ENCODE measurements at regions of chr3 and their contacts with region 1.

Region 1: DNA sequence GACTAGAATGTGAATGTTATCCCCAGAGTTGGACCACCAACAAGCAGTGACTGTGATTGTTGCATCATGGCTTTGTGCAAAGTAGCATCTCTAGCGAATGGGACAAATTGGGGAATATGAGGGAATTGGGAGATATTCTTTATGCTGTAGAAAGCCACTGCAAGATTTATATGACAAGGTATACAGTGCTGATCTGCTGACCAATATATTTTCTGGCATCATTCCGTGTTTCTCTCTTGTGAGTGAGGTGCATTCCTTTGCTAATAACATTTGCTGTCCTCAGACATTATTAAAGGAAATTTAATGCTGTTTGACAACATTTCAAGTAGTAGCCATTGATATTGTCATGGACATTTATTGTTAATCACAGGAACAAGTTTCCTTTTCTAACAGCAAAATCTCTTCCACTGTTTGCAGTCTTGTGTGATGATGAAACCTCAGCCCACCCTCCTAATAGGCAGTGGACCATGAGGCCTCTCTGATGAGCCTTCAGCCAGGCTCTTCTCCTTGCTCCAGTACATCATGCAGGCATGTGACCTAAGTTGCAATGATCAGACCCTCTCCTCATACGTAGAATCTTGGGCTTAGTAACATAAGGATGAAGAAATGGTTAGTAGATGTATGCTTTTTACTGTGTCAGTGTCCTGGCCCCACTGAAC is 16.1 kb downstream of the CNTN4 start:
- DNase-seq: no peak
- ATAC-seq: no peak
- H3K4me3 ChIP-seq: no peak overlapping the region
- H3K27ac ChIP-seq: no peak overlapping the region
- H3K4me1 ChIP-seq: no peaks in the 10 kb centered on the region
- H3K27me3 ChIP-seq: no peaks in the 10 kb centered on the region
- CTCF ChIP-seq: no peak
- POLR2A ChIP-seq: no peak
- RAD21 ChIP-seq: no peak

Region 2: GRCh38 chr3:140748-141330 is 1973.9 kb before region 1 on chr3:
- CTCF ChIA-PET with region 1: no interaction called
- POLR2A ChIA-PET with region 1: no interaction called
- dilution Hi-C with region 1: no loop called
- in situ Hi-C with region 1: no loop called
- intact Hi-C with region 1: loop called (anchors 5 kb)
- DNase-seq: no peak
- ATAC-seq: no peak
- H3K4me3 ChIP-seq: no peak overlapping the region
- H3K27ac ChIP-seq: no peak overlapping the region
- H3K4me1 ChIP-seq: no peaks in the 10 kb centered on the region
- H3K27me3 ChIP-seq: no peaks in the 10 kb centered on the region
- CTCF ChIP-seq: no peak
- POLR2A ChIP-seq: no peak
- RAD21 ChIP-seq: no peak